Heart right ventricle (tissue), 16 donors: ENCODE measurements at regions of chr17 and their contacts with region 1.

Region 1: GRCh38 chr17:16129441-16130205 is 85.7 kb downstream of the NCOR1 start:
- DNase-seq: no peak
- ATAC-seq: no peak
- H3K4me3 ChIP-seq: no peak overlapping the region
- H3K27ac ChIP-seq: no peak overlapping the region
- H3K4me1 ChIP-seq: no peaks in the 10 kb centered on the region
- H3K27me3 ChIP-seq: no peaks in the 10 kb centered on the region
- CTCF ChIP-seq: no peak

Region 2: GRCh38 chr17:16104189-16104588 is 25.4 kb before region 1 on chr17:
- intact Hi-C with region 1: loop called in 1 of 10 experiments (anchors 2 kb)
- DNase-seq: no peak
- ATAC-seq: no peak
- H3K4me3 ChIP-seq: no peak overlapping the region
- H3K27ac ChIP-seq: no peak overlapping the region
- H3K4me1 ChIP-seq: peaks cover 0 to 15% (median 7%) of the 10 kb centered on the region in 9 donors
- H3K27me3 ChIP-seq: no peaks in the 10 kb centered on the region
- CTCF ChIP-seq: no peak